ENCODE measurements at regions of chr18 and their contacts with region 1.

Region 1: GRCh38 chr18:12657684-12658425 is at the start of gene SPIRE1:
- DNase-seq: peak; percentile 74
- ATAC-seq: peak; percentile 77
- H3K4me3 ChIP-seq: peak within 1 kb of the TSS; percentile 78
- H3K27ac ChIP-seq: peak within 1 kb of the TSS; percentile 27
- H3K4me1 ChIP-seq: peaks cover 41% of the 10 kb centered on the region
- H3K27me3 ChIP-seq: no peaks in the 10 kb centered on the region
- CTCF ChIP-seq: no peak
- total RNA-seq, gene SPIRE1: 29.9 and 32.4 TPM in 2 replicates

Region 2: DNA sequence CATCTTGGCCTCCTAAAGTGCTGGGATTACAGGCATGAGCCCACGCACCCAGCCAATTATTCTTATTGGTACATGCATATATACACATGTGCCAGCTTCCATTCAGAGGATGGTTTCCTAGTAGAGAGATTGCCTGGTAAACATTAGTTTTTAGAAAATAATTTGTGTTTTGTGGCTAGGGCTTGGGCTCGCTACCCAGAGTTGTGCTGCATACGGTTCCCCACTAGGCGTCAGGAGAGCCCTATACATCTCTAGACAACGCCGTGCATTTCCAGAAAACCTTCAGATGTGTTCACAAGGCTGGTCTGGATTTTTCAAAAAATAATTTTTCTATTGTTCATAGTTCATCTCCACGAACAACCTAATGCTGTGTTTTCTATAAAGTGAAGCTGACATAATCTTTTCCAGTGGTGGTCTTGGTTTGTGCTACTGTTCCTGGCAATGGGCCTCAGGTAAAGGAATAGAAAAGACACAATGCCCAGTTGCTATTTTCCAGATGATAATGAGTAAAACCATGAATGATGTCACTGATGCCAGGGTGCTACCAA is 266.2 kb before region 1 on chr18:
- CTCF ChIA-PET with region 1: no interaction called
- POLR2A ChIA-PET with region 1: no interaction called
- intact Hi-C with region 1: loop called (anchors 1 kb)
- DNase-seq: peak; percentile 77
- ATAC-seq: peak; percentile 56
- H3K4me3 ChIP-seq: no peak overlapping the region
- H3K27ac ChIP-seq: no peak overlapping the region
- H3K4me1 ChIP-seq: peaks cover 29% of the 10 kb centered on the region
- H3K27me3 ChIP-seq: no peaks in the 10 kb centered on the region
- CTCF ChIP-seq: peak; percentile 97

Region 3: GRCh38 chr18:12543697-12544096 is 114.2 kb before region 1 on chr18:
- CTCF ChIA-PET with region 1: interaction called, 3 read pairs
- POLR2A ChIA-PET with region 1: no interaction called
- intact Hi-C with region 1: loop called (anchors 1 kb)
- DNase-seq: peak; percentile 85
- ATAC-seq: peak; percentile 72
- H3K4me3 ChIP-seq: peak overlapping the region; percentile 40
- H3K27ac ChIP-seq: peak overlapping the region; percentile 74
- H3K4me1 ChIP-seq: peaks cover 34% of the 10 kb centered on the region
- H3K27me3 ChIP-seq: no peaks in the 10 kb centered on the region
- CTCF ChIP-seq: no peak

Region 4: GRCh38 chr18:12606592-12607315 is 51.1 kb before region 1 on chr18:
- CTCF ChIA-PET with region 1: interaction called, 3 read pairs
- POLR2A ChIA-PET with region 1: interaction called, 4 read pairs
- intact Hi-C with region 1: loop called (anchors 1 kb)
- DNase-seq: peak; percentile 83
- ATAC-seq: peak; percentile 79
- H3K4me3 ChIP-seq: peak overlapping the region; percentile 46; the same call in 1 of the 2 replicates
- H3K27ac ChIP-seq: peak overlapping the region; percentile 95
- H3K4me1 ChIP-seq: peaks cover 47% of the 10 kb centered on the region
- H3K27me3 ChIP-seq: no peaks in the 10 kb centered on the region
- CTCF ChIP-seq: no peak

Region 5: GRCh38 chr18:13076886-13077285 is 419.0 kb after region 1 on chr18:
- CTCF ChIA-PET with region 1: no interaction called
- POLR2A ChIA-PET with region 1: no interaction called
- intact Hi-C with region 1: no loop called
- DNase-seq: no peak
- ATAC-seq: no peak
- H3K4me3 ChIP-seq: no peak overlapping the region
- H3K27ac ChIP-seq: no peak overlapping the region
- H3K4me1 ChIP-seq: no peaks in the 10 kb centered on the region
- H3K27me3 ChIP-seq: no peaks in the 10 kb centered on the region
- CTCF ChIP-seq: no peak